AG04450 (cell line): ENCODE measurements at regions of chr17 and their contacts with region 1.

Region 1: DNA sequence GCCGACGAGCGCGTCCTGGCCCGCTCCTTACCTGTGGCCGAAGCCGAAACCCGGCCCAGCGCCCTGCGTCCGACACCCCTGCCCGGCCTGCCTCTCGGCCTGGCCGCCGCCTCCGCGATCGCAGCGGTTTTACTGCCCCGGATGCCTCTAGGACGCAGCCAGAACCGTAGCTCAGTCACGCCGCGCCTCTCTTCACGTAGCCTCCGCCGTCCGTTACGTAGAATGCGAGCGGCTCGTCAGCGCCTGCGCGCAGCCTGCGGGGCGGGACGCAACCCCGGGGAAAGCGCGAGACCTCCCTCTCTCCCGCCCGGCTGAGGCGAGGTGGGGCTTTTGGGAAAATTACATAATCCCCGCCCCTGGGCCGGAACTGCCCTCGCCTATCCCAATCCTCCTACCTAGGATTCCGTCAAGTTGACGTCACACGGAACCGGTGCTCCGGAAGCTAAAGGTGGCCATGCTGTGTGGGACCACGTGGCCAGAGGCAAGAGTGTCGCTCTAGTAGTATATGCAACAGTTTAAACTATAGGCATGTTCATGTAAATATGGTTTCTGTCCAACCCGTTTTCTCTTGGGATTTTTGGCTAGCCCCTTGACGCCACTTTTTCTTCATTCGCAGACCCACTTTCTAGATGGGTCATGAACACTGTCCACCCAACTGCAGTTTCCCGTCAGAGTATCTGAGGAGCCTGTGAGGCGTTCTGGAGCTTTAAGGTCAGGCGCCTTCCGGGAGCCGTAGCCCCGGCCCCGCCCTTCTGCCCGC is at the start of gene CCDC47:
- DNase-seq: peak; percentile 97
- H3K4me3 ChIP-seq: peak within 1 kb of the TSS; percentile 65
- H3K27ac ChIP-seq: peak within 1 kb of the TSS; percentile 99
- H3K27me3 ChIP-seq: no peaks in the 10 kb centered on the region
- CTCF ChIP-seq: no peak
- polyA plus RNA-seq, gene CCDC47: 52.2 and 68.9 TPM in 2 replicates

Region 2: GRCh38 chr17:63621766-63622519 is 151.6 kb before region 1 on chr17 and contains the start of gene MAP3K3:
- CTCF ChIA-PET with region 1: no interaction called
- POLR2A ChIA-PET with region 1: interaction called, 10 read pairs
- DNase-seq: peak; percentile 100
- H3K4me3 ChIP-seq: peak within 1 kb of the TSS; percentile 75
- H3K27ac ChIP-seq: peak within 1 kb of the TSS; percentile 65
- H3K27me3 ChIP-seq: no peaks in the 10 kb centered on the region
- CTCF ChIP-seq: peak; percentile 17; the same call in 1 of the 2 replicates
- polyA plus RNA-seq, gene MAP3K3: 14.9 and 15.3 TPM in 2 replicates

Region 3: DNA sequence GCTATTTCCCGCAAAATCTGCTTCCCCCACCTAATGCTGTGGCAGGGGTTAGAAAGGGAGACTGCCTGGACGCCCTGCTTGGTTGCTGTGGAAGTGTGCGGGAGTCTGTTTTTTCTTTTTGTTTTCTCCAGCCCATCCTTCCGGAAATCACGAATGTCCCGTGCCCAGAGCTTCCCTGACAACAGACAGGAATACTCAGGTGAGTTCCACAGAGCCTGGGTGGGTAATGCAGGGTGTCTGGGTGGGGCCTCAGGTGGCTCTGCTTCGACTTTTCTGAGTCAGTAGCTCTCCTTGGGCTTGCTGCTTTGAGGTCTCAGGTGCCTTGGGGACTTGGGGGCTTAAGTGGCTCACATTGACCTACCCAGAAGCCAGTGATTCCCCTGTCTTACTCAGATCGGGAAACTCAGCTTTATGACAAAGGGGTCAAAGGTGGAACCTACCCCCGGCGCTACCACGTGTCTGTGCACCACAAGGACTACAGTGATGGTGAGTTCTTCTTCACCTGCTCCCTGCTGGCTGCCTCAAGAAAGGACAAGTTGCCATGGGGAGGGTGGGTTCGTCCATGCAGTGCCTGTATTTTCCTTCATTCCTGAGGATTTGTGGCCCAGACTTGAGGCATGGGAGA is 85.1 kb before region 1 on chr17:
- CTCF ChIA-PET with region 1: no interaction called
- POLR2A ChIA-PET with region 1: no interaction called
- DNase-seq: no peak
- H3K4me3 ChIP-seq: no peak overlapping the region
- H3K27ac ChIP-seq: no peak overlapping the region
- H3K27me3 ChIP-seq: no peaks in the 10 kb centered on the region
- CTCF ChIP-seq: no peak

Region 4: GRCh38 chr17:63785556-63785955 is 12.0 kb after region 1 on chr17:
- CTCF ChIA-PET with region 1: no interaction called
- POLR2A ChIA-PET with region 1: interaction called, 10 read pairs
- DNase-seq: no peak
- H3K4me3 ChIP-seq: no peak overlapping the region
- H3K27ac ChIP-seq: peak overlapping the region; percentile 65
- H3K27me3 ChIP-seq: no peaks in the 10 kb centered on the region
- CTCF ChIP-seq: no peak

Region 5: GRCh38 chr17:63842540-63843386 is 69.2 kb after region 1 on chr17 and contains the start of gene SMARCD2:
- CTCF ChIA-PET with region 1: no interaction called
- POLR2A ChIA-PET with region 1: interaction called, 12 read pairs
- DNase-seq: peak; percentile 99
- H3K4me3 ChIP-seq: peak within 1 kb of the TSS; percentile 88
- H3K27ac ChIP-seq: peak within 1 kb of the TSS; percentile 77
- H3K27me3 ChIP-seq: no peaks in the 10 kb centered on the region
- CTCF ChIP-seq: no peak
- polyA plus RNA-seq, gene SMARCD2: 48.8 and 58.3 TPM in 2 replicates